HepG2 (cell line): ENCODE measurements at regions of chr15 and their contacts with region 1.

Region 1: DNA sequence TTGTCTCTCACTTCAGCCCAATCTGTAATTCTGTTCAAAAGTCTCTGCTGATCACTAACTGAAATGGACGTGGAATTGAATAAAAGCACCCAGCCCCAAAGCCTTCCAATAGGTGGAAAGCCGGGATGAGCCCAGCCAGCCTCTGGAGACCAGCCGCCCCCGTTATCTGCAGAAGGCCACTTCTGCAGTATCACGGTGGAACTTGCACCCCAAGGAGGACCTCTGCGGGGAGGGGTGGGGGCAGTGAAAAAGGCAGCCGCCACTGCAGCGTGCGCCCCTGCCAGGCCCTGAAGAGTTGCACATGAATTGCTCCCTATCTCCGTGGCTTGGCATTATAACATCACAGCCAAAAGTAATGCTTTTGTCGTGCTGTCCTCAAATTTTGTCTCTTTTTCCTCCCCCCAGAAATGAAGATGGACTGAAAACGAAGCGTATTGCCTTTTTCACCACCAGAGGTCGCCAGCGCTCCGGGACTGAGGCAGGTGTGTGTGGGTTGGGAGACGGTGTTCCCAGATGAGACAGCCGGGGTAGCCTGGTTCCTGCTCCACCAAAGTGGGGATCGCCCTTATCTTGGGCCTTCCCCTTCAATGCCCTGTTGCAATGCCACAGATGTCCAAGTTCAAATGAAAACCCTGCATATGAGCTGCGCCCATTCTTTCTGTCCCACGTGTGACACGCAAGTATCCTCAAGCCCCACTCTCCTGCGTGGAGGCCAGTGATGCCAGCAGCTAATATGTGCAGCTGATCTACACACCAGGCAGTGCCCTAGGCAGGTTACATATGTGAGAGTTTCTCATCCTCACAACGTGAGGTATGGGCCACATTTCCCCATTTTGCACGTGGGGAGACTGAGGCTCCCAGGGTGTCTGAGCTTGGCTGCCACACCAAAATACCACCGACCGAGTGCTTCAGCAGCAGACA is 96.0 kb downstream of the LRRK1 start:
- DNase-seq: peak; percentile 53
- ATAC-seq: peak; percentile 78
- H3K4me3 ChIP-seq: no peak overlapping the region
- H3K27ac ChIP-seq: no peak overlapping the region
- H3K4me1 ChIP-seq: peaks cover 20% of the 10 kb centered on the region
- H3K27me3 ChIP-seq: peaks cover 9 to 61% of the 10 kb centered on the region in 2 experiments; a peak in 4 of 5 replicates
- CTCF ChIP-seq: peak; percentile 95
- EP300 ChIP-seq: no peak
- POLR2A ChIP-seq: no peak
- RAD21 ChIP-seq: peak; percentile 81

Region 2: DNA sequence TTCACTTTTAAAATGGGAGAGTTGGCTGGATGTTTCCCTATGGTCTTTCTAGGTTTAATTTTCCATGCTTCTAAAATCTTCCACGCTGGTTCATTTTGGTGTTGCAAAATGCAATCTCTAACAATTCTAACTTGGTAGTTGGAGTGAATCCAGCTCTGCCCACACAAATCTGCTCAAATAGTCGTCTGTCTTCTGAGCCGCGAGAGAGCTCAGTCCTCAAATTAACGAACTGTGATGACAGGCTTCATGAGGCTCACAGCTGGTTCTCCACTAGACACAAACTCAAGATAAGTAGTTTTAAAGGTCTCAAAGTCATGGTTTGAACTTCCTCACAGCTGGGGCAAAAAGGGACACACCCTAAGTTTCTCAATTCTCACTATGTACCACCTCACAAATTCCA is 1103.4 kb before region 1 on chr15:
- CTCF ChIA-PET with region 1: no interaction called
- POLR2A ChIA-PET with region 1: no interaction called
- in situ Hi-C with region 1: no loop called
- intact Hi-C with region 1: no loop called
- DNase-seq: no peak
- ATAC-seq: no peak
- H3K4me3 ChIP-seq: no peak overlapping the region
- H3K27ac ChIP-seq: no peak overlapping the region
- H3K4me1 ChIP-seq: no peaks in the 10 kb centered on the region
- H3K27me3 ChIP-seq: no peaks in the 10 kb centered on the region
- CTCF ChIP-seq: no peak
- EP300 ChIP-seq: no peak
- POLR2A ChIP-seq: no peak
- RAD21 ChIP-seq: no peak

Region 3: DNA sequence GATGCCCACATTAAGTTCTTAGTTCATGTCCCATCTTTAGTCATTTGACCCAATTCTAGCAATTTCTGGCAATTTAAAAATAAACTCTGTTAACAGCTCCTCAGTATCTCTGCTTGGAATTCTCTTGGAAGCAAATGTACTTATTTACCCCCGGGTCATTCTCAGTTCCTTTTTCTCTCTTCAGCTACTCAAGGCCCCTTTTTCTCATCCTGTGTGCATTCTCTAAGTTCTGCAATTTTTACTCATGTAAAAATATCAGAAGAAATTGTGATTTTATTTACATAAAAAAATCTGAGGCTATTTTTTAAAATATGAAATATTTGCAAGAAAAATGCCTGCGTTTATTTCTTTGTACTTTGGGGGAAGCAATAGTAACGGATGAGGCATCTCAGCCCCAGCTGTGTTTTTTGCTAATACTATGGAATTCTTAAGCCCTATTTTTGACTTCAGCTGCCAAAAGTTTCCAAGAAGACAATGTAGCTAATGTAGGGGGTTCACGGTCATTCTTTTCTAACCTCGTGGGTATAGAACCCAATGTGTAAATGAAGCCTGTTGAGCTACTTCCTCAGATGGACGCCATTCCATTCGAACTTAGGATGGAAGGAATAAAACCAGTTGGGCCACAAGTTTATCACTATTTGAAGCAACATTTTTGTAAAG is 506.4 kb before region 1 on chr15:
- CTCF ChIA-PET with region 1: no interaction called
- POLR2A ChIA-PET with region 1: no interaction called
- in situ Hi-C with region 1: no loop called
- intact Hi-C with region 1: no loop called
- DNase-seq: no peak
- ATAC-seq: no peak
- H3K4me3 ChIP-seq: no peak overlapping the region
- H3K27ac ChIP-seq: no peak overlapping the region
- H3K4me1 ChIP-seq: peaks cover 12% of the 10 kb centered on the region
- H3K27me3 ChIP-seq: no peaks in the 10 kb centered on the region; a peak in 2 of 5 replicates
- CTCF ChIP-seq: no peak
- EP300 ChIP-seq: no peak
- POLR2A ChIP-seq: no peak
- RAD21 ChIP-seq: no peak

Region 4: GRCh38 chr15:101070502-101071273 is 55.5 kb after region 1 on chr15:
- CTCF ChIA-PET with region 1: interaction called, 3 read pairs
- POLR2A ChIA-PET with region 1: interaction called, 5 read pairs
- in situ Hi-C with region 1: loop called (anchors 5 kb)
- intact Hi-C with region 1: loop called (anchors 2 kb)
- DNase-seq: peak; percentile 99
- ATAC-seq: peak; percentile 84
- H3K4me3 ChIP-seq: peak overlapping the region; percentile 27 to 62 (median 50); a peak in 5 of 6 replicates
- H3K27ac ChIP-seq: peak overlapping the region; percentile 96
- H3K4me1 ChIP-seq: peaks cover 66% of the 10 kb centered on the region
- H3K27me3 ChIP-seq: no peaks in the 10 kb centered on the region
- CTCF ChIP-seq: peak; percentile 26; the same call in 1 of the 2 replicates
- EP300 ChIP-seq: peak; percentile 93 to 97
- POLR2A ChIP-seq: peak in 1 of 2 experiments; percentile 75; a peak in 2 of 4 replicates
- RAD21 ChIP-seq: no peak

Region 5: GRCh38 chr15:101081888-101082287 is 66.7 kb after region 1 on chr15:
- CTCF ChIA-PET with region 1: no interaction called
- POLR2A ChIA-PET with region 1: no interaction called
- in situ Hi-C with region 1: no loop called
- intact Hi-C with region 1: no loop called
- DNase-seq: no peak
- ATAC-seq: no peak
- H3K4me3 ChIP-seq: no peak overlapping the region
- H3K27ac ChIP-seq: no peak overlapping the region
- H3K4me1 ChIP-seq: peaks cover 20% of the 10 kb centered on the region
- H3K27me3 ChIP-seq: no peaks in the 10 kb centered on the region
- CTCF ChIP-seq: no peak
- EP300 ChIP-seq: no peak
- POLR2A ChIP-seq: no peak
- RAD21 ChIP-seq: no peak

Region 6: GRCh38 chr15:101120987-101121386 is 105.8 kb after region 1 on chr15:
- CTCF ChIA-PET with region 1: interaction called, 4 read pairs
- POLR2A ChIA-PET with region 1: no interaction called
- in situ Hi-C with region 1: no loop called
- intact Hi-C with region 1: loop called (anchors 1 kb)
- DNase-seq: no peak
- ATAC-seq: peak; percentile 34
- H3K4me3 ChIP-seq: peak overlapping the region in 2 of 3 experiments; percentile 58 to 70; a peak in 2 of 6 replicates
- H3K27ac ChIP-seq: no peak overlapping the region
- H3K4me1 ChIP-seq: peaks cover 41% of the 10 kb centered on the region
- H3K27me3 ChIP-seq: peaks cover 4 to 32% of the 10 kb centered on the region in 2 experiments
- CTCF ChIP-seq: no peak
- EP300 ChIP-seq: no peak
- POLR2A ChIP-seq: no peak
- RAD21 ChIP-seq: no peak

Region 7: GRCh38 chr15:101258238-101259144 is 243.3 kb after region 1 on chr15:
- CTCF ChIA-PET with region 1: interaction called, 72 read pairs
- POLR2A ChIA-PET with region 1: no interaction called
- in situ Hi-C with region 1: loop called (anchors 5 kb)
- intact Hi-C with region 1: loop called (anchors 1 kb)
- DNase-seq: peak; percentile 57
- ATAC-seq: peak; percentile 68
- H3K4me3 ChIP-seq: peak overlapping the region in 1 of 3 experiments; percentile 25; a peak in 1 of 6 replicates
- H3K27ac ChIP-seq: no peak overlapping the region
- H3K4me1 ChIP-seq: peaks cover 33% of the 10 kb centered on the region
- H3K27me3 ChIP-seq: peaks cover 0 to 8% of the 10 kb centered on the region in 2 experiments; a peak in 3 of 5 replicates
- CTCF ChIP-seq: peak; percentile 88
- EP300 ChIP-seq: no peak
- POLR2A ChIP-seq: no peak
- RAD21 ChIP-seq: peak; percentile 73